ENCODE measurements at regions of chr12 and their contacts with region 1.

Region 1: DNA sequence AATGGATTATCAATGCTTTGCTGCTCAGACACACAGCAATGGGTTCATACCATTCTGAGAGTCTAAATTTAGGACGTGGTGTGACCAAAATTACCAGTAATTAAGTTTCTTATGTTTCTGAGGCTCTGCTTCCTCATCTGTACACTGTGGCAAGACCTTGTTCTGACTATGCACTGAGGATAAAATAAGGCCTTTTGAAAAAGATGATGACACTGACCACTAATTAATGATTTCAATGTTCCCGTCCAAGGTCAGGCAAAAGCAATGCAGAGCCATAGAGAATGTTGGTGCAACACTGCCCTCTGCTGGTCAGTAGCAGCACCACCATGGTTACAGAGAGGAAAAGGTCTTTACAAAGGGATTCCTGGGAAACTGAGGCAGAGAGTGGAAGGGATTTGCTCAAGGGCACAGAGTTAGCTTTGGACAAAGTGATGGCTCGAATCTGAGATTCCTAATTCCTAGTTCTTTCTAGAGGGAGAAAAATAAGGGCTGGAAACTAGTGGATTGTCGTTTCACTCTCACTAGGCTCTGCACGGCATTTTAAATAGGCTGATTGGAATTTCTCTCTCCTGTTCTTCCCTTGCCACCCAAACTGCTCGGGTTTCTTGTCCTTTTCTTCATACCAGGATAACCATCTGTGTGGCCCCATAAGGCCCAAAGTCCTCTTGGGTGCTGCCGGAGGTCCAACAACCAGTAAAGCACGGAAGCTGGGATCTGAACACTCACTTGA is 22.3 kb upstream of the P2RX7 start:
- DNase-seq: peak; percentile 81
- ATAC-seq: peak; percentile 85
- H3K4me3 Mint-ChIP-seq: no peak overlapping the region
- H3K27ac Mint-ChIP-seq: no peak overlapping the region
- H3K4me1 Mint-ChIP-seq: peaks cover 5% of the 10 kb centered on the region
- H3K27me3 Mint-ChIP-seq: no peaks in the 10 kb centered on the region

Region 2: GRCh38 chr12:120625557-120626419 is 484.6 kb before region 1 on chr12:
- CTCF ChIA-PET with region 1: no interaction called
- POLR2A ChIA-PET with region 1: no interaction called
- intact Hi-C with region 1: loop called in 1 of 2 experiments (anchors 1 kb)
- DNase-seq: peak; percentile 67
- ATAC-seq: peak; percentile 80
- H3K4me3 Mint-ChIP-seq: no peak overlapping the region
- H3K27ac Mint-ChIP-seq: no peak overlapping the region
- H3K4me1 Mint-ChIP-seq: no peaks in the 10 kb centered on the region
- H3K27me3 Mint-ChIP-seq: peaks cover under 1% of the 10 kb centered on the region

Region 3: GRCh38 chr12:120640840-120641833 is 469.2 kb before region 1 on chr12:
- CTCF ChIA-PET with region 1: interaction called, 3 read pairs
- POLR2A ChIA-PET with region 1: no interaction called
- intact Hi-C with region 1: loop called (anchors 2 to 10 kb)
- DNase-seq: peak; percentile 78
- ATAC-seq: peak; percentile 77
- H3K4me3 Mint-ChIP-seq: peak overlapping the region; percentile 63
- H3K27ac Mint-ChIP-seq: no peak overlapping the region
- H3K4me1 Mint-ChIP-seq: peaks cover 6% of the 10 kb centered on the region
- H3K27me3 Mint-ChIP-seq: peaks cover 43% of the 10 kb centered on the region

Region 4: GRCh38 chr12:120944645-120945231 is 165.6 kb before region 1 on chr12:
- CTCF ChIA-PET with region 1: interaction called, 3 read pairs
- POLR2A ChIA-PET with region 1: no interaction called
- intact Hi-C with region 1: loop called in 1 of 2 experiments (anchors 2 kb)
- DNase-seq: peak; percentile 86
- ATAC-seq: peak; percentile 91
- H3K4me3 Mint-ChIP-seq: no peak overlapping the region
- H3K27ac Mint-ChIP-seq: no peak overlapping the region
- H3K4me1 Mint-ChIP-seq: peaks cover 8% of the 10 kb centered on the region
- H3K27me3 Mint-ChIP-seq: no peaks in the 10 kb centered on the region

Region 5: GRCh38 chr12:121005346-121005815 is 105.0 kb before region 1 on chr12:
- CTCF ChIA-PET with region 1: interaction called, 11 read pairs
- POLR2A ChIA-PET with region 1: no interaction called
- intact Hi-C with region 1: loop called (anchors 1 kb)
- DNase-seq: peak; percentile 83
- ATAC-seq: peak; percentile 87
- H3K4me3 Mint-ChIP-seq: no peak overlapping the region
- H3K27ac Mint-ChIP-seq: peak overlapping the region; percentile 31
- H3K4me1 Mint-ChIP-seq: no peaks in the 10 kb centered on the region
- H3K27me3 Mint-ChIP-seq: no peaks in the 10 kb centered on the region

Region 6: DNA sequence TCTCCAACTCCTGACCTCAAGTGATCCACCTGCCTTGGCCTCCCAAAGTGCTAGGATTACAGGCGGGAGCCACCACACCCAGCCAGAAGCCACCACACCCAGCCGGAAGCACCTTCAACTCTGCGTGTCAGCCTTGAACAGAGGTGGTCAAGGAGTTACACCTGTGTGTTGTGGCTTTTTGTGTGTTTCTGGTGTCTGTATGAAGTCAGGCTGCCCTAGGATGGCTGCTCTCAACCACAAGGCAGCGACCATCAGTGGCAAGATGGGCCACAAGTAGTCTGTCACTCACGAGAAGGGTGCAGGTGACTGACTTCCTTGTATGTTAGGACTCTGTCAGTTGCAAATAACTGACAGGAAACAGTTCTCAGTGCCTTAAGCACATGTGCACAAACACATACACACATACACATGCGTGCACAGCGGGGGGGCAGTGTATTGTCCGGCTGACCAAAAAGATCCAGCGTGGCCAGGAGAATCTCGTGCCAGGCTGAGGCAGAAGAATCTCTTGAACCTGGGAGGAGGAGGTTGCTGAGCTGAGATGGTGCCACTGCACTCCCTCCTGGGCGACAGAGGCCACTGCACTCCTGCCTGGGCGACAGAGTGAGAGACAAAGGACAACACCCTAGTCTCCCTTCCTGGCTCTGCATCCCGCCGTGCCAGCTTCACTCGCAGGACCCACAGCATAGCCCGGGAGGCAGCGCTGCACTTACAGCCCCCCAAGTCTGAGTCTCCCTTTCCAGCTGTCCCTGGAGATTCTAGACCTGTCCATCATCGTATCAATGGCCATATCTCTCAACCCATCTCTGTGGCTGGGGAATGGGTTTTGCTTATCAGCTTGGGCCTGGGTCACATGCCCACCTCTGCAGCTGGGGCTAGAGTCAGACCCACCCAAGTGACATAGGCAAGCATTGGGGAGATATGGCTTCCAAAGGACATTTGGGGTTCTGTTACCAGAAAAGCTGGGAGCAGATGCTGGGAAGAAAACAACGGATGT is 113.2 kb after region 1 on chr12:
- CTCF ChIA-PET with region 1: no interaction called
- POLR2A ChIA-PET with region 1: no interaction called
- intact Hi-C with region 1: loop called in 1 of 2 experiments (anchors 2 kb)
- DNase-seq: peak; percentile 65
- ATAC-seq: peak; percentile 72
- H3K4me3 Mint-ChIP-seq: no peak overlapping the region
- H3K27ac Mint-ChIP-seq: peak overlapping the region; percentile 75
- H3K4me1 Mint-ChIP-seq: peaks cover 43% of the 10 kb centered on the region
- H3K27me3 Mint-ChIP-seq: no peaks in the 10 kb centered on the region

Measured in activated CD4-positive, alpha-beta T cell treated with anti-CD3 and anti-CD28 coated beads for 36 hours (primary cell).